Breast epithelium (tissue), 4 donors: ENCODE measurements at regions of chrX and their contacts with region 1.

Region 1: GRCh38 chrX:10189317-10190268 is 32.8 kb downstream of the CLCN4 start:
- DNase-seq: peak; percentile 56 to 65
- H3K4me3 ChIP-seq: no peak overlapping the region
- H3K27ac ChIP-seq: no peak overlapping the region
- H3K4me1 ChIP-seq: no peaks in the 10 kb centered on the region
- H3K27me3 ChIP-seq: peaks cover 0 to 40% of the 10 kb centered on the region in 2 donors
- CTCF ChIP-seq: peak; percentile 77 to 86 (median 81)
- POLR2A ChIP-seq: no peak

Region 2: GRCh38 chrX:8755116-8755515 is 1434.5 kb before region 1 on chrX:
- intact Hi-C with region 1: no loop called
- DNase-seq: no peak
- H3K4me3 ChIP-seq: no peak overlapping the region
- H3K27ac ChIP-seq: no peak overlapping the region
- H3K4me1 ChIP-seq: no peaks in the 10 kb centered on the region
- H3K27me3 ChIP-seq: peaks cover 0 to 22% of the 10 kb centered on the region in 2 donors
- CTCF ChIP-seq: no peak
- POLR2A ChIP-seq: no peak

Region 3: DNA sequence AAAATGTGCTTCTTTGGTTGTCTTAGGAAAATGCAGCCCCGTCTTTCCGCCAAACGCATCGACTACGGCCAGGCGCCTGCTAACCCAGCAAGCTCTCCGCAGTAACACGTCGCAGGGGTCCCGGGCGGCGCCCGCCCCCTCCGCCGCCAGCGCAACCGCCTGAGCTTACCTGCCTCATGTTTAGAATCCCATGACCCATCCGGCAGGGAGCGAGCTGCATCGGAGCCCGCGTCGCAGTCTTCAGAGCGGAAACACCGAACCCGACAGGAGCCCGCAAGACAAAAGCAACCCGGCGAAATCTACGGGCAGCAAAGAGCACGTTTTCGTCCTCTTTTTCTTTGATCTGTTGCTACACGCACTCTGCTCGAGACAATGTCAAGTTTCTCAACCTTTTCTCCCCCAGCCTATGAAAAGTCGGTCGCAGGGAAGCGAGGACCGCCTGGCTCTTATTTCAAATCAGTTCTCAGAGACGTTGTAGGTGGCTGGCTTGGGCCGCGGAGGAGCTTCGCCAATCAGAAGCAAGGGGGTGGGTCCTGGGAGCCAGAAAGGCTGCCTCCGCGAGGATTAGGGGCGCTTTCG is 430.6 kb after region 1 on chrX and contains the start of gene MID1:
- intact Hi-C with region 1: loop called (anchors 10 kb)
- DNase-seq: peak; percentile 51 to 54
- H3K4me3 ChIP-seq: peak within 1 kb of the TSS; percentile 56 to 70 (median 57)
- H3K27ac ChIP-seq: peak within 1 kb of the TSS; percentile 71 to 79
- H3K4me1 ChIP-seq: no peaks in the 10 kb centered on the region
- H3K27me3 ChIP-seq: peaks cover 0 to 36% of the 10 kb centered on the region in 2 donors
- CTCF ChIP-seq: no peak
- POLR2A ChIP-seq: no peak
- total RNA-seq, gene MID1: 6.9 to 18.9 (median 10.8) TPM